Activated CD4-positive, alpha-beta memory T cell treated with anti-CD3 and anti-CD28 coated beads for 36 hours (primary cell): ENCODE measurements at regions of chr6 and their contacts with region 1.

Region 1: DNA sequence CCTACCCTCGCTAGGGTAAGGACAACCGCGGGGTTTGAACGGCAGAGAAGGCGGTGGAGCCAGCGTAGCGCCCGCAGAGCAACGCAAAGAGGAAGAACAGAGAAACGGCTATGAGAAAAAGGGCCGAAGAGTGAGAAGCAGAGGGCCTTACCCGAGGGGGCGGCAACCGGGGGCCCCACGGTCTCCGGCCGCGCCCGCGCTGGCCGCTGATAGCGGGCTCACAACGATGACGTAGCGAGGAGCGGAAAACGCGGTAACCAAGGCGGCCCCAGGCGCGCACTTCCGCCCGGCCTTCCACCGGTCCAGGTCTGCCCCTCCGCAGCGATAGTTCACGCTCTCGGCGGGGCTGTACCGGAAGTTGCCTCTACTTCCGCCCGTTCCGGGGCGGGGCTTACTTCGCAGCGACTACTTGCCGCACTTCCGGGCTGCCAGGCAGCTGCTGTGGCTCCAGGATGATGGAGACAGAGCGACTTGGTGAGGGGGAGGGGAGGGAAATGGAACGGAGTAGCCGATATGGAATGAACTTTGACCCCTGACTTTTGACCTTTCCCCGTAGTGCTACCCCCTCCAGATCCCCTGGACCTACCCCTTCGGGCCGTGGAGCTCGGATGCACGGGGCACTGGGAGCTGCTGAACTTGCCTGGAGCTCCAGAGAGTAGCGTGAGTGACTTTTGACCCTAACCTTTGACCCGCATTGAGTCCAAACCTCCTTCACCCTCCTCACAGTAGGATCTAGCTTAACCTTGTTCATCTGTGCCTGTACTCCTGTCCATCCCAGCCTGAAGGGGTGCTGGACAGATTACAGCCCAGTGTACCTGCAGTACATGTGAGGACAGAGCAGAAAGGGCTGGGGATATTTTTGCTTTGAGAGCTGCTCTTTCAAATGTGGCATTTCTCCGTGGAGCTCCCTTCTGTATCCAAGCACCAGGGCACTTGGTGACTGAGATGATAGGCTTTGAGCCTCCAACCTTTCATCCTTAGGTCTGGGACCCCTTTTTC is at the starts of genes NELFE and SKIC2:
- DNase-seq: peak; percentile 99
- H3K4me3 Mint-ChIP-seq: peak within 1 kb of the TSS; percentile 99
- H3K27ac Mint-ChIP-seq: peak within 1 kb of the TSS; percentile 98
- H3K4me1 Mint-ChIP-seq: peaks cover 43% of the 10 kb centered on the region
- H3K27me3 Mint-ChIP-seq: no peaks in the 10 kb centered on the region
- total RNA-seq, gene NELFE: 87.1 to 89.0 TPM
- total RNA-seq, gene SKIC2: 95.7 to 101 TPM

Region 2: DNA sequence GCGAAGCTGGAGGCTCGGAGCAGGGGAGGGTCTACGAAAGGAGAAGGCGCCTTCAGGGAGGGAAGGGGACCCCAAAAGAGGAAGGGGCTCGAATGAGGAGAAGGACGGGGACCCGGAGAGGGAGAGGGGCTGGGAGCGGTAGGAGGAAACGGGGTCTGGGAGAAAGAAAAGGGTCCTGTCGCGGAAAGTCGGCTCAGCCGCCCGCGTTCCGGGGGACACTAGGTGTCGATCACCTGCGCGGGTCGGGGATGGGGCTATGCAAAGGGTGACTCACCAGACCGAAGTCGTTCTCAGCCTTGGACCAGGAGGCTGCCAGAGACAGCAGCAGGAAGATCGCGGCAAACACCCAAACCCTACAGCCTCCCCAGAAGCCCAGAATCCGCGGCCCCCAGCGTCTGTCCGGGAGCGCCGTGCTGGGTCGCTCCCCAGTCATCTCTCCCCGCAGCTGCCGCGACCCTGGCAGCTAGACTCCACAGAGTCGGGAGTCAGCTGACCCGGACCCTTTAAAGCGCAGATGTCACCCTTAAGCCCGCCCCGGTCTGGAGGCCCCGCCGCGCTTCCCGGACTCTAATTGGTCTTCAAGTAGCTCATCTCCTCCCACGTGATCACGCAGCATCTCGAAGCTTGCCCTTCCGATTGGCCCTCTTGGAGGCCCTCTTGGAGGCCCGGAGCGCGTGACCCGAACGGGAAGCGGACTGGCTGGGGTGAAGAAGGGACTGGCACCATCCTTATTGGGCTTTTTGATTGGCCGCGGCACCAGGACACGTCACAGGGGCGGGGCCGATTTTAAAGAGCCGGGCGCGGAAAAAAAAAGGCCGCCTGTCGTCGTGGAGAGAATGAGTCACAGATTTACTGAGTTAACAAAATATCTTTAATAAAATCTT is 96.5 kb before region 1 on chr6 and contains the start of gene NEU1:
- CTCF ChIA-PET with region 1: no interaction called
- POLR2A ChIA-PET with region 1: no interaction called
- intact Hi-C with region 1: loop called (anchors 1 kb)
- DNase-seq: peak; percentile 100
- H3K4me3 Mint-ChIP-seq: peak within 1 kb of the TSS; percentile 95
- H3K27ac Mint-ChIP-seq: peak within 1 kb of the TSS; percentile 89
- H3K4me1 Mint-ChIP-seq: peaks cover 20% of the 10 kb centered on the region
- H3K27me3 Mint-ChIP-seq: peaks cover 2% of the 10 kb centered on the region
- total RNA-seq, gene NEU1: 13.0 to 13.4 TPM

Region 3: GRCh38 chr6:31897612-31898382 is 61.2 kb before region 1 on chr6 and contains the start of gene EHMT2:
- CTCF ChIA-PET with region 1: no interaction called
- POLR2A ChIA-PET with region 1: interaction called, 15 read pairs
- intact Hi-C with region 1: loop called (anchors 2 kb)
- DNase-seq: peak; percentile 91
- H3K4me3 Mint-ChIP-seq: peak within 1 kb of the TSS; percentile 94
- H3K27ac Mint-ChIP-seq: peak within 1 kb of the TSS; percentile 94
- H3K4me1 Mint-ChIP-seq: peaks cover 34% of the 10 kb centered on the region
- H3K27me3 Mint-ChIP-seq: no peaks in the 10 kb centered on the region
- total RNA-seq, gene EHMT2: 45.5 to 46.0 TPM

Region 4: GRCh38 chr6:31940256-31940664 is 18.8 kb before region 1 on chr6:
- CTCF ChIA-PET with region 1: no interaction called
- POLR2A ChIA-PET with region 1: no interaction called
- intact Hi-C with region 1: no loop called
- DNase-seq: no peak
- H3K4me3 Mint-ChIP-seq: no peak overlapping the region
- H3K27ac Mint-ChIP-seq: no peak overlapping the region
- H3K4me1 Mint-ChIP-seq: peaks cover 2% of the 10 kb centered on the region
- H3K27me3 Mint-ChIP-seq: peaks cover 16% of the 10 kb centered on the region

Region 5: DNA sequence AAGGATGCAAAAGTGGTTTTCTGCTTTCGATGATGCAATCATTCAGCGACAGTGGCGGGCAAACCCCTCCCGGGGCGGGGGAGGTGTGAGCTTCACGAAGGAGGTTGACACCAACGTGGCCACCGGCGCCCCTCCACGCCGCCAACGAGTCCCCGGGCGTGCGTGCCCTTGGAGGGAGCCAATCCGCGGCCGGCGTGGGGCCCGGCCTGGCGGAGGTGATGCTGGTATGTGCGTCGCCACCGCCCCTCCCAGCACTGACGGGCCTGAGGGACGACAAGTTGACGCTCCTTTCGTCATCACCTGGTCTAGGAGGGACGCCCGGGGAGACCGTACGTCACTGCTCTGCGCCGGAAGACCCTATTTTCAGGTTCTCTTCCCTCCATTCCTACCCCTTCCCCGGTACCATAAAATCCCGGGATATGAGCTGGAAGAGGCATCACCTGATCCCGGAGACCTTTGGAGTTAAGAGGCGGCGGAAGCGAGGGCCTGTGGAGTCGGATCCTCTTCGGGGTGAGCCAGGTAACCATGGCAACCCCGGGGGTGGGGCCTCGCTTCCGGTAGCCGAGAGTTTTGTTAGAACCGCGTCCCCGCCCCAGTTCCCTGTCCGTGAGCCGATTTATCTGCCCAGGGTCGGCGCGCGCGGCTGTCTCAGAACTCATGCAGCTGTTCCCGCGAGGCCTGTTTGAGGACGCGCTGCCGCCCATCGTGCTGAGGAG is 13.1 kb after region 1 on chr6 and contains the start of gene DXO:
- CTCF ChIA-PET with region 1: interaction called, 4 read pairs
- POLR2A ChIA-PET with region 1: interaction called, 39 read pairs
- intact Hi-C with region 1: loop called (anchors 1 kb)
- DNase-seq: peak; percentile 99
- H3K4me3 Mint-ChIP-seq: peak within 1 kb of the TSS; percentile 95
- H3K27ac Mint-ChIP-seq: peak within 1 kb of the TSS; percentile 100
- H3K4me1 Mint-ChIP-seq: peaks cover 39% of the 10 kb centered on the region
- H3K27me3 Mint-ChIP-seq: no peaks in the 10 kb centered on the region
- total RNA-seq, gene DXO: 10.8 to 12.3 TPM

Region 6: DNA sequence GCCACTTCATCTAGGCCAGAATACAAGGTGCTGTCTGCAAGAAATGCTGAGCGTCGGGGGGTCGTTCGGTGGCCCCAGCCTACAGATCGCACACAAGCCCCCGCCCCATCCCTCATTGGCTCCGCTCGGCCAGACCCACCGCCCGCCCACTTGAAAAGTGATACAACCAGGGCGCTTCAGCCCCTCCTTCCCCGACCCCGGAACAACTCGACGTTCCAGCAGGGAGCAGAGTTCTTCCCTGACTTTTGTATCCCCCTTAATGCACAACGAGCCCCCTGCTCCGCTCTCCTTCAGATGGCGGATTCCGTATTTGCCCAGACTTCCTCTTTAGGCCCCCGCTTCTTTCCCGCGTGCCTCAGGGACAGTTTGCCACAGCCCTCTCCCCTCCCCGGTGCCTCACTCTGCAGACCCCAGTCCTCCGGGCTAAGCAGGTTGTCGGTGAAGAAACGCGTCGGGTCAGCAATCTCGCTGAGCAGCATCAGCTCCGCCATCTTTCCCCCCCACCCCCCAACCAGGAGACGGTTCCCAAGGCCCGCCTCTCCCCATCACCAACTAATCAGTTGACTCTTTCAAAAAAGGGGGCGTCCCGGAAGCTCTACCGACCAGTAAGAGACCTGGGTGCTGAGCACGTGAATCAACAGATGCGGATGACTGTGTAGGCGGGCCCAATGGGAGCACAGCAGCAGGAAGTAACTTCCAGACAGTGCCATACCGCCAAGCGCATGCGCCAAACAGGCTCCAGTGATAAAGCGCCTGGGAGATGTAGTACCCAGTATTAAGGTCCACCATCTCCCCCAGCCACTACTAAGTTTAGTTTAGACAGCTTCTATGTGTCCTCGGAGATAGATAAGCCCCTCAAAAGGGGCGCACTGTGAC is 168.9 kb after region 1 on chr6 and contains the start of gene ATF6B:
- CTCF ChIA-PET with region 1: no interaction called
- POLR2A ChIA-PET with region 1: no interaction called
- intact Hi-C with region 1: loop called (anchors 1 kb)
- DNase-seq: peak; percentile 99
- H3K4me3 Mint-ChIP-seq: peak within 1 kb of the TSS; percentile 99
- H3K27ac Mint-ChIP-seq: peak within 1 kb of the TSS; percentile 96
- H3K4me1 Mint-ChIP-seq: peaks cover 40% of the 10 kb centered on the region
- H3K27me3 Mint-ChIP-seq: no peaks in the 10 kb centered on the region
- total RNA-seq, gene ATF6B: 67.4 to 80.9 TPM

Region 7: GRCh38 chr6:32195652-32195901 is 236.5 kb after region 1 on chr6:
- CTCF ChIA-PET with region 1: no interaction called
- POLR2A ChIA-PET with region 1: no interaction called
- intact Hi-C with region 1: loop called (anchors 5 kb)
- DNase-seq: peak; percentile 100
- H3K4me3 Mint-ChIP-seq: peak overlapping the region; percentile 96
- H3K27ac Mint-ChIP-seq: peak overlapping the region; percentile 98
- H3K4me1 Mint-ChIP-seq: peaks cover 23% of the 10 kb centered on the region
- H3K27me3 Mint-ChIP-seq: no peaks in the 10 kb centered on the region